Activated CD4-positive, alpha-beta memory T cell treated with anti-CD3 and anti-CD28 coated beads for 36 hours (primary cell): ENCODE measurements at regions of chr15 and their contacts with region 1.

Region 1: GRCh38 chr15:41774062-41774881 is at the start of gene MAPKBP1:
- DNase-seq: peak; percentile 99
- H3K4me3 Mint-ChIP-seq: peak within 1 kb of the TSS; percentile 92
- H3K27ac Mint-ChIP-seq: peak within 1 kb of the TSS; percentile 95
- H3K4me1 Mint-ChIP-seq: peaks cover 55% of the 10 kb centered on the region
- H3K27me3 Mint-ChIP-seq: no peaks in the 10 kb centered on the region
- total RNA-seq, gene MAPKBP1: 16.1 to 16.6 TPM

Region 2: DNA sequence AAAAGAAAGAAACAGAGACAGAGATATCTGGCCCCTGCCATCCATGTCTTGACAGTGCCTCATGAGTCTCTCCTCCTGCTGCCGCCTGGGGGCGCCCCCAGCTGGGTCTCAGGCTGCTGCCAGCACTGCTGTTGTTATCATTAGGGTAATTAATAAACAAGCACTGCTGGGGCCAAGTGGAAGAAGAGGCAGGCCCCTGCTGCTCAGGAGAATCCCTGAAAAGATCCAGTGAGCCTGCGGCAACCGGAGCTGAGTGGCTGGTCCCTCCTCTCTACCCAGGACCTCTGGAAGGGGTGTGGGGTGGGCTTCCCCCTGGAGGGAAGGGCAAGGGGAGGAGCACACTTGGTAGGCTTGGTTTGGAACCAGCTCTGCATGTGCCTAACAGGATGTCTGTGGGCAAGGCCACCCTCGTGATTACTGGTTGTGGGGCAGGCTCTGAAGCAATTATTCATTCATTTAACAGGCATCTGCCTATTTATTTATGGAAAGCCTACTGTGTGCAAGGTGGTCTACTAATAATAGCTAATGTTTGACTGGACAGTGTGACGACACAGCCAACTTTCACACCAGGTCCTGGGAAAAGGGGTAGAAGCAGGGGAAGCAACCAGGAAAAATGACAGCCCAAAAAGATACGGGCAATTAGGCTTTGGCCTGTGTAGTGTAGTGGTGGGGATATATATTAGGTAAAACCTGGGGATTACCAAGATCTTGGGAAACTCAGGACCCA is 216.4 kb before region 1 on chr15:
- CTCF ChIA-PET with region 1: interaction called, 16 read pairs
- POLR2A ChIA-PET with region 1: no interaction called
- intact Hi-C with region 1: loop called (anchors 5 kb)
- DNase-seq: peak; percentile 83
- H3K4me3 Mint-ChIP-seq: peak overlapping the region; percentile 82
- H3K27ac Mint-ChIP-seq: peak overlapping the region; percentile 70
- H3K4me1 Mint-ChIP-seq: peaks cover 17% of the 10 kb centered on the region
- H3K27me3 Mint-ChIP-seq: peaks cover 17% of the 10 kb centered on the region

Region 3: GRCh38 chr15:41695750-41696426 is 78.4 kb before region 1 on chr15:
- CTCF ChIA-PET with region 1: interaction called, 13 read pairs
- POLR2A ChIA-PET with region 1: no interaction called
- intact Hi-C with region 1: no loop called
- DNase-seq: peak; percentile 66
- H3K4me3 Mint-ChIP-seq: peak overlapping the region; percentile 10
- H3K27ac Mint-ChIP-seq: peak overlapping the region; percentile 70
- H3K4me1 Mint-ChIP-seq: peaks cover 47% of the 10 kb centered on the region
- H3K27me3 Mint-ChIP-seq: no peaks in the 10 kb centered on the region

Region 4: GRCh38 chr15:41811432-41812195 is 37.3 kb after region 1 on chr15:
- CTCF ChIA-PET with region 1: interaction called, 283 read pairs
- POLR2A ChIA-PET with region 1: interaction called, 4 read pairs
- intact Hi-C with region 1: loop called (anchors 1 kb)
- DNase-seq: peak; percentile 84
- H3K4me3 Mint-ChIP-seq: no peak overlapping the region
- H3K27ac Mint-ChIP-seq: no peak overlapping the region
- H3K4me1 Mint-ChIP-seq: peaks cover 10% of the 10 kb centered on the region
- H3K27me3 Mint-ChIP-seq: no peaks in the 10 kb centered on the region

Region 5: DNA sequence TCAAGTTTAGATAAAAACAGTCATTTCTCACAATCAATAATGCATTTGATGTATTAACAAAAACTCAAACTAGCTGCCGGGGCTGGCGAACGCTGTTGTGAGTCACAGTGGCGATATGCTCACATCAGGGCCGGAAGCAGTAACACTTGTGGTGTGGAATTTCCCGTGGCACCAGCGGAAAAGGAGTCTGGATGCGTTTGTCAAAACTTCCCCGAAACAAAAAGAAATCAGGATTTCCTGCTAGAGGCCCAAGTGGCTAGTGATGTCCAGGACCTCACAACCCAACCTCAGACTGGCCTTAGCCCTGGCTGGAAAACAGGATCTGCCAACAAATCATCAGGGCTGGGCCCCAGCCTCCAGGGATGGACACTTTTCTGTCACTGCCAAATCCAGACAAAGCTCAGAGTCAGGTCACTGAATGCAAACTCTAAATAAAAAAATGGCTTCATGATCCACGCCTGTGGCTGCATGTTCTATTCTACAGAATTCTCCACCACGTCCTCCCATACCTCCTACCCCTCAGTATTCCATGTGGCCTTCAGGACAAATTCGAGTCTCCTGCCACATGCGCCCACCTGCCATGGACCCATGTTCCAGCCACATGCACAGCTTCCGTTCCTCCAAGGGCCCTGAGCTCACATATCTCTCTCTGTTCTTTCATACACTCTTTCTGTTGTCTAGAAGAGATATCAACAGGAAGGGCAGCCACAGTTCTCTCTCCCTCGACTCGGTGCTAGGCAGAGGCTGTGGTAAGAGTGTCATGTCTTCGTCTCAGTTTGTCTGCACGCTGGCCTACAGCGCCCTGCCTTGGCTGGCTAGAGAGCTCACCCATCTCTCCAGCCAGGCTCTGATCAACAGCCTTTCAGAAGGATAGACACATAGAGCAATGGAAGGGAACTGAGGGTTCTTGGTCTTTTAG is 162.6 kb after region 1 on chr15:
- CTCF ChIA-PET with region 1: interaction called, 29 read pairs
- POLR2A ChIA-PET with region 1: interaction called, 3 read pairs
- intact Hi-C with region 1: loop called (anchors 1 kb)
- DNase-seq: peak; percentile 94
- H3K4me3 Mint-ChIP-seq: peak overlapping the region; percentile 68
- H3K27ac Mint-ChIP-seq: peak overlapping the region; percentile 98
- H3K4me1 Mint-ChIP-seq: peaks cover 83% of the 10 kb centered on the region
- H3K27me3 Mint-ChIP-seq: no peaks in the 10 kb centered on the region